WTC11 (cell line): ENCODE measurements at regions of chr7 and their contacts with region 1.

Region 1: DNA sequence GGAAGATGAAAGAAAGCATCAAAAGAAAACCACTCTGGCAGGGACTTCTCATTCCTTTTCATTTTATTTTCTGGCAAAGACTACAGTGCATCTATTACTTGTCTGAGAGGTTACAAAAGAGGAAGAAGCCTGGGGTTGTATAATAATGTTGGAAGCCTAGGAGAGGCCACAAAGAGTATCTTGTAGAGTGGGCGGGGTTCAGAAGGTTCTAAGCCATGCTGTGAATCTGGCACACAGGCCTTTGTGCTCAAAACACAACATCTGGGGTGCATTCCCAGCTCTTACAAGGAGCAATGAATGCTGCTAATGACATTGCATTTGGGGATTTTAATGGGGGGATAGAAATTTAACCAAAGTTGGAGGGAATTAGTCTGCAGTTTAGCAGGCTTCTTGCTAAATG is 49.4 kb downstream of the MRPL32 start:
- DNase-seq: no peak
- ATAC-seq: no peak
- H3K4me3 Mint-ChIP-seq: no peak overlapping the region
- H3K27ac Mint-ChIP-seq: no peak overlapping the region
- H3K4me1 Mint-ChIP-seq: no peaks in the 10 kb centered on the region
- H3K27me3 Mint-ChIP-seq: no peaks in the 10 kb centered on the region
- CTCF ChIP-seq: no peak

Region 2: GRCh38 chr7:42931834-42932651 is 49.6 kb before region 1 on chr7 and contains the starts of genes MRPL32 and PSMA2:
- CTCF ChIA-PET with region 1: interaction called, 11 read pairs
- POLR2A ChIA-PET with region 1: no interaction called
- DNase-seq: peak; percentile 94
- ATAC-seq: peak; percentile 99
- H3K4me3 Mint-ChIP-seq: peak within 1 kb of the TSS; percentile 100
- H3K27ac Mint-ChIP-seq: peak within 1 kb of the TSS; percentile 99
- H3K4me1 Mint-ChIP-seq: peaks cover 23% of the 10 kb centered on the region
- H3K27me3 Mint-ChIP-seq: no peaks in the 10 kb centered on the region
- CTCF ChIP-seq: no peak
- total RNA-seq, gene MRPL32: 72.2 to 84.4 TPM (median 75.7 TPM) in 3 replicates
- total RNA-seq, gene PSMA2: 203 to 228 TPM (median 219 TPM) in 3 replicates

Region 3: GRCh38 chr7:42964849-42965805 is 16.5 kb before region 1 on chr7:
- CTCF ChIA-PET with region 1: interaction called, 11 read pairs
- POLR2A ChIA-PET with region 1: no interaction called
- DNase-seq: no peak
- ATAC-seq: peak; percentile 67
- H3K4me3 Mint-ChIP-seq: no peak overlapping the region
- H3K27ac Mint-ChIP-seq: no peak overlapping the region
- H3K4me1 Mint-ChIP-seq: peaks cover 14% of the 10 kb centered on the region
- H3K27me3 Mint-ChIP-seq: no peaks in the 10 kb centered on the region
- CTCF ChIP-seq: no peak

Region 4: GRCh38 chr7:42993038-42993437 is 11.4 kb after region 1 on chr7:
- CTCF ChIA-PET with region 1: interaction called, 37 read pairs
- POLR2A ChIA-PET with region 1: no interaction called
- DNase-seq: peak; percentile 41
- ATAC-seq: peak; percentile 95
- H3K4me3 Mint-ChIP-seq: no peak overlapping the region
- H3K27ac Mint-ChIP-seq: no peak overlapping the region
- H3K4me1 Mint-ChIP-seq: peaks cover 20% of the 10 kb centered on the region
- H3K27me3 Mint-ChIP-seq: no peaks in the 10 kb centered on the region
- CTCF ChIP-seq: no peak

Region 5: DNA sequence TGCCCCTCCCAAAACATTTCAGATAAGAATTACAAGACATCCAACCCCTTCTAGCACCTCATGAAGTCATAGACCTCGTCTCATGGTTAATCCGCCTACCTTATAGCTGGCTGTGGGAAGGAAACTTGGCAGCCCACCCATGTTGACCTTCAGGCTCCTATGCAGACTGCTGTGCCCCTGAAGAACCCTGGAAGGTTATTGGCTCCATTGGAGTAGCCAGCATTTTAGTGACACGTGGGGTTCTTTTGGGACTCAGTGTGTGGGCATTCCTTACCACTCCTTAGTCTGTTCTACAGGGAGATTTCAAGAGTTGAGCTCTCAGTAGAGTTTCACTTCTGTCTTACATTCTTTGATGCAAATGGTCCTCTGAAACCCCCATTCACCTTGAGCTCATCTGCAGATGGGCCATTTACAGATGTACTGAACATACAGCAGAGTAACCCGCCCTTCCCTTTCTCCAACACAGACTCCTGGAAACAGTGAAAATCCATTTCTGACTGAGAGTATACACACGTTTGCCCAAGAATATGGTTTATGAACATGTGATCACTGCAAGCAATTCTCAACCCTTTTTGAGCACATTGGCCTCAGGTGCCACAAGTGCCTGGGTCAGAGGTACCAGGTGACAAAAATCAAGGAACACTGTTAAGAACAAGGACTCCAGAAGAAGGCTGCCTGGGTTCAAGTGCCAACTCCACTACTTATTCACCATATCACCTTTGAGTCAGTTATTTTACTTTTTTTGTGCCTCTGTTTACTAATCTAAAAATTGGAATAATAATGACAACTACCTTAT is 76.9 kb after region 1 on chr7:
- CTCF ChIA-PET with region 1: no interaction called
- POLR2A ChIA-PET with region 1: no interaction called
- DNase-seq: no peak
- ATAC-seq: no peak
- H3K4me3 Mint-ChIP-seq: peak overlapping the region; percentile 24; the same call in 1 of the 2 replicates
- H3K27ac Mint-ChIP-seq: peak overlapping the region; percentile 18; the same call in 1 of the 2 replicates
- H3K4me1 Mint-ChIP-seq: peaks cover 27% of the 10 kb centered on the region
- H3K27me3 Mint-ChIP-seq: no peaks in the 10 kb centered on the region; the same call in 1 of the 2 replicates
- CTCF ChIP-seq: no peak

Region 6: DNA sequence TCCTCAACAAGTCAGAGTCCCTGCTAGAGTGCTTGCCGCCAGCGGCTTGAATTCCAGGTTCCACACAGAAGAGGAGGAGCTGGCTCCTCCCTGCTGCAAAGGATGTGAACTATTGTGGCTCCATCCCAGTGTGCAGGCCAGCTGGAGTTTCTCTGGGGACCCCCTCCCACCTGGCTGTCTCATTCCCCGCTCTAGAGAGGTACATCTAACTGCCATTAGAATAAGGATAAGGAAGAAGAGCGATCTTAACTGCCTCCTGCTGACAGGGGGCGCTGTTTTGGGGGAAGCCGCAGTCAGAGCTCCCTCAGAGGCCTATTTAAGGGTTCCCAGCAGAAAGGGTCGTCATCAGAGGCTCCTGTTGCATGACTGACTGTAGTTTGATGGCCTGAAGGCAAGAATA is 90.0 kb after region 1 on chr7:
- CTCF ChIA-PET with region 1: interaction called, 10 read pairs
- POLR2A ChIA-PET with region 1: no interaction called
- DNase-seq: peak; percentile 88
- ATAC-seq: peak; percentile 98
- H3K4me3 Mint-ChIP-seq: no peak overlapping the region
- H3K27ac Mint-ChIP-seq: no peak overlapping the region
- H3K4me1 Mint-ChIP-seq: peaks cover 24% of the 10 kb centered on the region
- H3K27me3 Mint-ChIP-seq: no peaks in the 10 kb centered on the region
- CTCF ChIP-seq: peak; percentile 85